Activated CD8-positive, alpha-beta T cell treated with anti-CD3 and anti-CD28 coated beads, Interleukin-2, amount 10 ng/mL, durations not matched to agents 7 days and 5 days (primary cell): ENCODE measurements at regions of chr19 and their contacts with region 1.

Region 1: GRCh38 chr19:55258828-55259539 is at the start of gene PPP6R1:
- DNase-seq: peak; percentile 95
- ATAC-seq: peak; percentile 76
- H3K4me3 Mint-ChIP-seq: peak within 1 kb of the TSS; percentile 91
- H3K27ac Mint-ChIP-seq: peak within 1 kb of the TSS; percentile 100
- H3K4me1 Mint-ChIP-seq: peaks cover 26% of the 10 kb centered on the region
- H3K27me3 Mint-ChIP-seq: no peaks in the 10 kb centered on the region
- total RNA-seq, gene PPP6R1: 256 to 265 TPM

Region 2: DNA sequence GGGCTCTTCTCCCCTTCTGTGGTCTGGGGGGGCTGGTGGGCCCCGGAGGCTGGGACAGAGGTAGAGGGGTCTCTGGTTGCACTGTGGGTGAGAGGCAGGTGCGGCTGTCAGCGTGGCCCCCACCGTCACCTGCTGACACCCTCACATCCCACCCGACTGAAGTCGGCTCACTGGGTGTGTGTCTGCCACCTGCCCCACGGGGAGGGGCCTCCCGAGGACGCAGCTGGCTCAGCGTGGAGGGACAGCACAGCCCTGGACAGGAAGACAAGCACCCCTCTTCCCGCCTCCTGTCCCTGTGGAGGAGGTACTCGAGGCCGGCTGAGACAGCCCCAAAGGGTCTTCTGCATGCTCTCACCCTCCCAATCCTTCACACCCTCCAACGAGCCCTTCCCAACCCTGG is 28.2 kb before region 1 on chr19:
- CTCF ChIA-PET with region 1: no interaction called
- POLR2A ChIA-PET with region 1: no interaction called
- DNase-seq: no peak
- ATAC-seq: no peak
- H3K4me3 Mint-ChIP-seq: no peak overlapping the region
- H3K27ac Mint-ChIP-seq: no peak overlapping the region
- H3K4me1 Mint-ChIP-seq: no peaks in the 10 kb centered on the region
- H3K27me3 Mint-ChIP-seq: no peaks in the 10 kb centered on the region

Region 3: DNA sequence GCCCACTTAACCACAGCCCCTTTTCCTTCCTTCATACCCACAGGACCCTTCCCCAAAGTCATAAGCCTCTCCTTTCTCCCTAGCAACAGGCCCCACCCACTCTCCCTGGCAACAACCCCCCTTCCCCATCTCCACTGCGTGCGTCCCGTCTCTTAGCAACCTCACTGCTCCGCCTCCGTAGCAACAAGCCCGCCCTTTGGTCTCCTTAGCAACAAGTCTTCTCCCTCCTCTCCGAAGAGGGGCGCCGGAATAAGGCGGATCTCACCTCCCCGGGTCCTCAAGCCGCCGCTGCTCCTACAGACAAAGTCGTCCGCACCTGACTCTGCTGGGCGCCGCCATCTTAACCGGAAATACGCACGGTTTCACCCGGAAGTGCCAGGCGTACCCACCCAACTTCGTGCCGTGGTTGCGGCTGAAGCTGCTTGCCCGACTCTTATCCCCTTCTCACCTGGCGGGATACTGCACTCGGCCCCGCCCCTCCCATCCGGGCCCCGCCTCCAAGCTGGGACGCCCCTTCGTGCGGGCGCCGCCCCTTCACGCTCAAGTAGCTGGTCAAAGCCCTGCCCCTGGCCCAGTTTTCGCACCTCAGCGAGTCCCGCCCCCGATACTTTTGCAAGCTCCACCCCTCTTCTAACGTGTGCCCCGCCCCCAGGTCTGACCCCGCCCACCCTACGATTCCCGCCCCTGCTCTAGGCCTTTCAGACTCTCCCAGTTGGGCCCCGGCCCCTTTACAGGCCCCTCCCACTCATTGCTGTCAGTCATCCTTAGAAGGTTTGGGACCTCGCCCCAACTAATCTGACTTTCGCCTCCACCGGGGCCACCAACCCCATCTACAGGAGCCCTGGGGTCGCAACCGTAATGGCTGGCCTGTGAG is 21.0 kb after region 1 on chr19 and contains the start of gene HSPBP1:
- CTCF ChIA-PET with region 1: interaction called, 11 read pairs
- POLR2A ChIA-PET with region 1: interaction called, 35 read pairs
- DNase-seq: peak; percentile 98
- ATAC-seq: peak; percentile 87
- H3K4me3 Mint-ChIP-seq: peak within 1 kb of the TSS; percentile 100
- H3K27ac Mint-ChIP-seq: peak within 1 kb of the TSS; percentile 99
- H3K4me1 Mint-ChIP-seq: peaks cover 49% of the 10 kb centered on the region
- H3K27me3 Mint-ChIP-seq: peaks cover 9% of the 10 kb centered on the region
- total RNA-seq, gene HSPBP1: 31.1 to 32.7 TPM

Region 4: GRCh38 chr19:55407800-55408532 is 149.0 kb after region 1 on chr19:
- CTCF ChIA-PET with region 1: no interaction called
- POLR2A ChIA-PET with region 1: interaction called, 13 read pairs
- DNase-seq: peak; percentile 99
- ATAC-seq: peak; percentile 92
- H3K4me3 Mint-ChIP-seq: peak overlapping the region; percentile 96
- H3K27ac Mint-ChIP-seq: peak overlapping the region; percentile 99
- H3K4me1 Mint-ChIP-seq: peaks cover 38% of the 10 kb centered on the region
- H3K27me3 Mint-ChIP-seq: peaks cover 8% of the 10 kb centered on the region

Region 5: GRCh38 chr19:55599468-55600279 is 340.7 kb after region 1 on chr19 and contains the start of gene FIZ1:
- CTCF ChIA-PET with region 1: no interaction called
- POLR2A ChIA-PET with region 1: no interaction called
- DNase-seq: peak; percentile 98
- ATAC-seq: peak; percentile 80
- H3K4me3 Mint-ChIP-seq: peak within 1 kb of the TSS; percentile 97
- H3K27ac Mint-ChIP-seq: peak within 1 kb of the TSS; percentile 100
- H3K4me1 Mint-ChIP-seq: peaks cover 38% of the 10 kb centered on the region
- H3K27me3 Mint-ChIP-seq: no peaks in the 10 kb centered on the region
- total RNA-seq, gene FIZ1: 13.6 to 13.7 TPM